HCT116 (cell line): ENCODE measurements at regions of chr1 and their contacts with region 1.

Region 1: GRCh38 chr1:109643385-109644230 is 12.3 kb upstream of the GSTM4 start:
- DNase-seq: peak; percentile 60
- ATAC-seq: peak; percentile 95
- H3K4me3 ChIP-seq: peak overlapping the region; percentile 16 to 19; a peak in 3 of 4 replicates
- H3K27ac ChIP-seq: no peak overlapping the region; the same call in 1 of the 2 replicates
- H3K4me1 ChIP-seq: peaks cover 2 to 17% of the 10 kb centered on the region in 2 experiments
- H3K27me3 ChIP-seq: no peaks in the 10 kb centered on the region
- CTCF ChIP-seq: peak; percentile 87 to 93 (median 89)
- POLR2A ChIP-seq: no peak
- RAD21 ChIP-seq: peak; percentile 83

Region 2: GRCh38 chr1:109620841-109621286 is 22.7 kb before region 1 on chr1:
- CTCF ChIA-PET with region 1: interaction called, 13 read pairs
- POLR2A ChIA-PET with region 1: no interaction called
- RAD21 ChIA-PET with region 1: no interaction called
- intact Hi-C with region 1: no loop called
- DNase-seq: peak; percentile 48
- ATAC-seq: peak; percentile 80
- H3K4me3 ChIP-seq: peak overlapping the region; percentile 88 to 95
- H3K27ac ChIP-seq: peak overlapping the region; percentile 86
- H3K4me1 ChIP-seq: peaks cover 30 to 47% of the 10 kb centered on the region in 2 experiments; a peak in 3 of 4 replicates
- H3K27me3 ChIP-seq: no peaks in the 10 kb centered on the region
- CTCF ChIP-seq: no peak
- POLR2A ChIP-seq: no peak
- RAD21 ChIP-seq: no peak

Region 3: DNA sequence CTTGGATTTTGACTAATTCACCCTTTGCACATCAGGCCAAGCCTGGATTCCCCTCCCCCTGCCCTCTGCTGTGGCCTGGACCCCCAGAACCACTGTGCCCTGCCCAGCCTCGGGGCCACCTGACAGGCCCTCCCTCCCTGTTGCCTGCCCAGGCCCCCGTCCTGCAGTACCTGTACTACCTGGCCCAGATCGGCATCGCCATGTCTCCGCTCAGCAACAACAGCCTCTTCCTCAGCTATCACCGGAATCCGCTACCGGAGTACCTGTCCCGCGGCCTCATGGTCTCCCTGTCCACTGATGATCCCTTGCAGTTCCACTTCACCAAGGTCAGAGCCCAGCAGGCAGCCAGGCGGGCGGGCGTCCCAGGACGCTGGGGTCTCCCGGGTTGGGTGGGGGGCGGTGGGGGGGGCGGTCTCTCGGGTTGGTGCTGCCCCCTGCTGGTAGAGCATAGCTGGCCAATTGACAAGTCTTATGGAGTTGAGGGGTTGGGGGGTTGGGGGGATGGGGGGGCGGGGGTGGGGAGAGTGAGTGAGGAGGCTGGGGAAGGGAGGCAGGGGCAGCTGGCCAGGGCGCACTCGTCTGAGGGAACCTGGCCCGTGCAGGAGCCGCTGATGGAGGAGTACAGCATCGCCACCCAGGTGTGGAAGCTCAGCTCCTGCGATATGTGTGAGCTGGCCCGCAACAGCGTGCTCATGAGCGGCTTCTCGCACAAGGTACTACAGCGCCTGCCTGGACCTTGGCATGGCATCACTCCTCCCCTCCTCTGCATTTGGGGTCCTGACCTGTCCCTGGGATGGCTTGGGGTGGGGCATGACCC is 13.3 kb before region 1 on chr1:
- CTCF ChIA-PET with region 1: interaction called, 35 read pairs
- POLR2A ChIA-PET with region 1: no interaction called
- RAD21 ChIA-PET with region 1: interaction called in 1 of 2 experiments, 4 read pairs
- intact Hi-C with region 1: no loop called
- DNase-seq: no peak
- ATAC-seq: peak; percentile 28
- H3K4me3 ChIP-seq: no peak overlapping the region
- H3K27ac ChIP-seq: no peak overlapping the region
- H3K4me1 ChIP-seq: peaks cover 0 to 9% of the 10 kb centered on the region in 2 experiments; a peak in 1 of 4 replicates
- H3K27me3 ChIP-seq: no peaks in the 10 kb centered on the region
- CTCF ChIP-seq: peak in 1 of 3 experiments; percentile 9; a peak in 1 of 6 replicates
- POLR2A ChIP-seq: no peak
- RAD21 ChIP-seq: no peak

Region 4: GRCh38 chr1:109655601-109656519 is 12.3 kb after region 1 on chr1 and contains the start of gene GSTM4:
- CTCF ChIA-PET with region 1: interaction called, 21 read pairs
- POLR2A ChIA-PET with region 1: no interaction called
- RAD21 ChIA-PET with region 1: no interaction called
- intact Hi-C with region 1: no loop called
- DNase-seq: peak; percentile 16
- ATAC-seq: peak; percentile 95
- H3K4me3 ChIP-seq: peak within 1 kb of the TSS; percentile 67 to 83
- H3K27ac ChIP-seq: peak within 1 kb of the TSS; percentile 30; the same call in 1 of the 2 replicates
- H3K4me1 ChIP-seq: peaks cover 0 to 23% of the 10 kb centered on the region in 2 experiments; a peak in 3 of 4 replicates
- H3K27me3 ChIP-seq: peaks cover 8% of the 10 kb centered on the region; the same call in 1 of the 2 replicates
- CTCF ChIP-seq: no peak
- POLR2A ChIP-seq: no peak
- RAD21 ChIP-seq: no peak
- total RNA-seq, gene GSTM4: 15.9 TPM

Region 5: GRCh38 chr1:109773146-109773899 is 129.7 kb after region 1 on chr1:
- CTCF ChIA-PET with region 1: interaction called, 73 read pairs
- POLR2A ChIA-PET with region 1: interaction called, 4 read pairs
- RAD21 ChIA-PET with region 1: interaction called, 3 to 8 read pairs
- intact Hi-C with region 1: loop called (anchors 1 kb)
- DNase-seq: peak; percentile 70
- ATAC-seq: peak; percentile 92
- H3K4me3 ChIP-seq: no peak overlapping the region
- H3K27ac ChIP-seq: no peak overlapping the region
- H3K4me1 ChIP-seq: peaks cover 0 to 18% of the 10 kb centered on the region in 2 experiments; a peak in 2 of 4 replicates
- H3K27me3 ChIP-seq: no peaks in the 10 kb centered on the region
- CTCF ChIP-seq: peak; percentile 85 to 97 (median 92)
- POLR2A ChIP-seq: no peak
- RAD21 ChIP-seq: peak; percentile 99